Activated T-helper 1 cell treated with anti-CD3 and anti-CD28 coated beads, Interleukin-12 subunit alpha, Interleukin-12 subunit beta, Interleukin-2, Interleukin-4 antibody, amounts not matched to agents 30 ng/mL and 10 ng/mL and 1 ng/mL, durations not matched to agents 14 hours and 24 hours and 36 hours (primary cell): ENCODE measurements at regions of chr1 and their contacts with region 1.

Region 1: DNA sequence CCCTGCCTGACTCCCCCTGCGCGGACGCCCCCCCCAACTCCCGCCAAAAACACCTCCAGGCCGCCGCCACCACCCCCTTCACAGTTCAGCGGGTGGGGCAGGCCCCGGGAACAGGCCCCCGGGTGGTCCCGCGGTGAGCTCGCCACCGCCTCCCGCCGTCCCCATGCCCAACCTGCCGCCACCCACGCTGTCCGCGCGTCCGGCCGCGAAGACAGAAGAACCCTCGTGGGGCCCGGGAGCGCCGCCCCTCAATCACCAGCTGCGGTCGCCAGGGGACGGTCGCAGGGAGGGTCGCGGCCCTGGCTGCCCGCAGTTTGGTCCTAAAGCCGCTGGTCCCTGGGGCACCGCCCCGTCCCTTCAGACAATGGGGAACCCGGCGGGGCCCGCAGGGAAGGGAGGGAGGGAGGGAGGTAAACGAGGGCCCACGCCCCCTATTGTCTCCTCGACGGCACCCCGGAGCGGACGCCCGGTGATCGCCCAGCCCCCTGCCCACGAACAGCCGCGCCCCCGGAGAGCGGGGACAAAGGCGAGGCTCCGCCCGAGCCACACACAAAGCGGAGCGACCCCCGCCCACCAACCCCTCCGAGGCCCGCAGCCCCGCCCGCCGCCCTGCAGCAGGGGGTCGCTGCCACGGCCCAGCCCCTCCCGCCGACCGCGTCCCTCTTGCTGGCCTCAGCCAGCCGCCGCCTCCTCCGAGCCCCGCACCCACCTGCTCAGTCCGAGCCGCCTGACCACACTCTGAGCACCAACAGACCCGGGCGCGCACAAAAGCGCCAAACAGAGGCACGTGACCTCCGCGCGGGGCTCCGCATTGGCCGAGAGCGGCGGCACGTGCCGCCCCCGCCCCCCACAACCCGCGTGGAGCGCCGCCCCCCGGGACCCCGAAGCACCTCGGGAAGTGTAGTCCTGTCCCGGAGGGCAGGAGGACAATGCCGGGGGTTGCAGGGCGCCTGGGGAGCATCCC is at the start of gene STMN1:
- DNase-seq: peak; percentile 76
- H3K4me3 Mint-ChIP-seq: peak within 1 kb of the TSS; percentile 98
- H3K27ac Mint-ChIP-seq: peak within 1 kb of the TSS; percentile 93
- H3K4me1 Mint-ChIP-seq: peaks cover 49% of the 10 kb centered on the region
- H3K27me3 Mint-ChIP-seq: peaks cover 24% of the 10 kb centered on the region
- total RNA-seq, gene STMN1: 203 and 205 TPM in 2 replicates

Region 2: DNA sequence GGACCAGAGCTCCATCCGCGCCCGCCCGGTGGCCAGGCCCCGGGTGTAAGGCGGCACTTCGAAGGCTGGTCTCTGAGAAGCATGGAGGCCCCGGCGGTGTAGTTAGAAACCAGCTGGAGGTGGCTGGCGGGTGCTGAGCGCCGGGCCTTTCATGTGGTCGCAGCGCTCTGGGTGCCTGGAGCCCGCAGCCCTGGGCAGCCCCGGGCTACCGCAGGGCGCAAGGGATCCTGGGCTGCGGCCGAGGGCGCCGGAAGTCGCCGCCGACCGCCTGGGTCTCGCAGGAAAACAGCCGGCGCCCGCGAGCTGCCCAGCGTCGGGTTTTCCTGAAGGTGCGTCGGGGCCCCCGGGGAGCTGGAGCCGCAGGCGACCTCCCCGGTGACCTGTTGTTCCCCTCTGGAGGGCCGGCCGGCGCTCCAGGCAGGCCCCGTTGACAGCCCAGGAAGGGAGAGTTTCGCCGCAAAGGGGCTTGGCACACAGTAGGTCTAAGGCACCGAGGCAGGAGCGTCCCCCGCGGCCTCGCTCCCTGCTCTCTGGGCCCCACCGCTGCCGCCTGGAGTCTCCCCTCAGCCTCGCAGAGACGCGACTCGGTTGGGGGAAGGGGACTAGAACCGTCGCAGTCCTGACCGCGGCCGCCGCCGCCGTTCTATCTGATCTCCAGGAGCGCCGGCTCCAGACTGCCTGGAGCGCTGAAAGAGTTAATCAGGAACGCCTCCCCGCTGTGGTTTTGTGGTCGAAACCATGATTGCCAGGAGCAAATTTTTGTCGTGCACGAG is 1584.1 kb before region 1 on chr1:
- intact Hi-C with region 1: loop called (anchors 5 kb)
- DNase-seq: peak; percentile 71
- H3K4me3 Mint-ChIP-seq: peak overlapping the region; percentile 65
- H3K27ac Mint-ChIP-seq: peak overlapping the region; percentile 71
- H3K4me1 Mint-ChIP-seq: peaks cover 48% of the 10 kb centered on the region
- H3K27me3 Mint-ChIP-seq: peaks cover 94% of the 10 kb centered on the region

Region 3: DNA sequence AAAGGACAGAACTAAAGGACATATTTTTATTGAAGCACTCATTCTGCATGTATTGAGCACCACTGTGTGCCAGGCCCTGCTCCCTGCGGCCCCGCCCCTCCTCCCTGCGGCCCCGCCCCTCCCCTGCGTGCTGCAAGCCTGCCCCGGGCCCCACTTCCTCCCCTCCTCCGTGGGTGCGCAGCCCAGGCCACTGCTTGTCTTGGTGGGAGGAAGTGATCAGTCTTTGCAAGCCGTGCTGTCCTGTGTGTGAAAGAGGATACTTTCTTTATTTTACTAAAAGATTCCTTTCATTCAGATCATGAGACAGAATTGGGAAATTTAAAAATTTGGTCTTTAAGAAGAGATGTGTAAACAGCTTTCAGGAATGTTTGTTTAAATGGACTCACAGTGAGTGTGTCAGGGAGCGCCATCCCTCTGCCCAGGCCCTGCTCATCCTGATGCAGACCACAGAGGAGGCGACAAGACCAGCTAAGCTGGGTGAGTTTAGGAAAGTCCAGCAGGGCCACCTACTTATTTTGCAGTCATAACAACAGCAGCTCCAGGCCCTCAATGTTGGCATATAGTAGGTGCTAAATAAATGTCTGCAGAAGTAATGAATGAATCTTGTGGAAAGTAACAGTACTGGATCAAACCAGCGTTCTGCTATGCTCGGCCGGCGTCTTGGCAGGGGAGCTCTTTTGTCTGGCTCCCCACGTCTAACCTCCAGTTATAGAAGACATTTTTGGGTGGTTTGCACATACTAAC is 194.2 kb before region 1 on chr1:
- intact Hi-C with region 1: no loop called
- DNase-seq: no peak
- H3K4me3 Mint-ChIP-seq: no peak overlapping the region
- H3K27ac Mint-ChIP-seq: no peak overlapping the region
- H3K4me1 Mint-ChIP-seq: peaks cover 24% of the 10 kb centered on the region
- H3K27me3 Mint-ChIP-seq: peaks cover 37% of the 10 kb centered on the region

Region 4: GRCh38 chr1:25825605-25826004 is 80.4 kb before region 1 on chr1:
- intact Hi-C with region 1: no loop called
- DNase-seq: no peak
- H3K4me3 Mint-ChIP-seq: no peak overlapping the region
- H3K27ac Mint-ChIP-seq: no peak overlapping the region
- H3K4me1 Mint-ChIP-seq: peaks cover 18% of the 10 kb centered on the region
- H3K27me3 Mint-ChIP-seq: no peaks in the 10 kb centered on the region

Region 5: GRCh38 chr1:25858906-25859789 is 46.8 kb before region 1 on chr1 and contains the start of gene AUNIP:
- intact Hi-C with region 1: loop called (anchors 1 kb)
- DNase-seq: peak; percentile 88
- H3K4me3 Mint-ChIP-seq: peak within 1 kb of the TSS; percentile 89
- H3K27ac Mint-ChIP-seq: peak within 1 kb of the TSS; percentile 89
- H3K4me1 Mint-ChIP-seq: peaks cover 35% of the 10 kb centered on the region
- H3K27me3 Mint-ChIP-seq: no peaks in the 10 kb centered on the region
- total RNA-seq, gene AUNIP: 10.2 and 12.3 TPM in 2 replicates

Region 6: GRCh38 chr1:25895365-25895993 is 10.5 kb before region 1 on chr1:
- intact Hi-C with region 1: loop called (anchors 1 kb)
- DNase-seq: peak; percentile 85
- H3K4me3 Mint-ChIP-seq: no peak overlapping the region
- H3K27ac Mint-ChIP-seq: peak overlapping the region; percentile 40
- H3K4me1 Mint-ChIP-seq: peaks cover 34% of the 10 kb centered on the region
- H3K27me3 Mint-ChIP-seq: no peaks in the 10 kb centered on the region

Region 7: GRCh38 chr1:25997828-25998761 is 92.1 kb after region 1 on chr1 and contains the start of gene PAFAH2:
- intact Hi-C with region 1: loop called (anchors 1 kb)
- DNase-seq: peak; percentile 96
- H3K4me3 Mint-ChIP-seq: peak within 1 kb of the TSS; percentile 98
- H3K27ac Mint-ChIP-seq: peak within 1 kb of the TSS; percentile 98
- H3K4me1 Mint-ChIP-seq: peaks cover 18% of the 10 kb centered on the region
- H3K27me3 Mint-ChIP-seq: no peaks in the 10 kb centered on the region
- total RNA-seq, gene PAFAH2: 8.0 and 9.0 TPM in 2 replicates

Region 8: GRCh38 chr1:26015358-26015757 is 109.4 kb after region 1 on chr1:
- intact Hi-C with region 1: no loop called
- DNase-seq: no peak
- H3K4me3 Mint-ChIP-seq: no peak overlapping the region
- H3K27ac Mint-ChIP-seq: no peak overlapping the region
- H3K4me1 Mint-ChIP-seq: peaks cover 10% of the 10 kb centered on the region
- H3K27me3 Mint-ChIP-seq: peaks cover 12% of the 10 kb centered on the region